ENCODE measurements at regions of chr11 and their contacts with region 1.

Region 1: GRCh38 chr11:130737866-130738431 is 178.3 kb downstream of the SNX19 start:
- DNase-seq: no peak
- H3K4me3 ChIP-seq: peak overlapping the region; percentile 19
- H3K27ac ChIP-seq: peak overlapping the region; percentile 51
- H3K4me1 ChIP-seq: peaks cover 14% of the 10 kb centered on the region
- H3K27me3 ChIP-seq: no peaks in the 10 kb centered on the region
- CTCF ChIP-seq: no peak

Region 2: GRCh38 chr11:130261571-130261970 is 476.4 kb before region 1 on chr11:
- CTCF ChIA-PET with region 1: no interaction called
- POLR2A ChIA-PET with region 1: no interaction called
- intact Hi-C with region 1: no loop called
- DNase-seq: no peak
- H3K4me3 ChIP-seq: no peak overlapping the region
- H3K27ac ChIP-seq: no peak overlapping the region
- H3K4me1 ChIP-seq: no peaks in the 10 kb centered on the region
- H3K27me3 ChIP-seq: no peaks in the 10 kb centered on the region
- CTCF ChIP-seq: no peak

Region 3: GRCh38 chr11:130580372-130580771 is 157.6 kb before region 1 on chr11:
- CTCF ChIA-PET with region 1: no interaction called
- POLR2A ChIA-PET with region 1: no interaction called
- intact Hi-C with region 1: loop called (anchors 2 kb)
- DNase-seq: peak; percentile 84
- H3K4me3 ChIP-seq: no peak overlapping the region
- H3K27ac ChIP-seq: no peak overlapping the region
- H3K4me1 ChIP-seq: peaks cover 15% of the 10 kb centered on the region
- H3K27me3 ChIP-seq: no peaks in the 10 kb centered on the region
- CTCF ChIP-seq: no peak

Region 4: DNA sequence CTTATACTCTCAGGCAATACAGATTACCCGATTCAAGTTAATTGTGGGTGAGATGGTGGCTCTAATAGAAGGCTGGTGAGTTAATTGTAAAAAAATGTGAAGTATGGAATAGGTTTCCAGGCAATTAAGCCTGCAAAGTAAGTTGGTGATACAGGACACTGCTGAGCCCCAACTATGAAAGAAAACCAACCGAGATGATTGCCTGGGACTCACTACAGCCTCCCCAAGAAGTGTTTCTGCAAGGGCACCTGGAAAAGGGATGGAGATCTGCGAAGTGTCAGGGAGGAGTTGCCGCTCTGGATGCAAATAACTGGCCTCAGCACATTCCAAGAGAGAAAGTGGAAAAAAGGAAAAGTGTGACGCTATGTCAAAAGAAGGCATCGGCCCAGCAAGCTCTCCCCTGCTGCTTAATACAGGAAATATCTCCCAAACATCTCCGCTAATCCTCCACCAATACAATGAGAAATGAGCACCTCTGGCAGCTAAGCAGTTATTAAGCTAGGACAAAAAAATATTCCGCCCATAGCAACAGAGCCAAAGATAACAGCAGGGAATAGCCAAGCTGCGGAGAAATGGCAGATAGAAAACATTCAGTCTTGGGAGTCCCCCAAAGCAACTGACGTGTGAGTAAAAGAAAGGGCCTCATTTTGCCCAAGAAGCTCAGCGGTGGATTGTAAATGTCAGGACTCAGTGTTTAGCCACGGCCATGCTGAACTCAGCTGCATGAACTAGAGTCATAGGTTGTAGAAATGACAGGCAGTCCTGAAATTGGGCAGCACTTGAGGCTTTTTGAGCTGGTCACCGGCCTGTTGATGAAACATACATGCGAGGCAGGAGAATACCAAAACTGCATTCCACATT is 44.6 kb after region 1 on chr11:
- CTCF ChIA-PET with region 1: no interaction called
- POLR2A ChIA-PET with region 1: no interaction called
- intact Hi-C with region 1: loop called (anchors 1 kb)
- DNase-seq: peak; percentile 95
- H3K4me3 ChIP-seq: peak overlapping the region; percentile 5
- H3K27ac ChIP-seq: peak overlapping the region; percentile 83
- H3K4me1 ChIP-seq: peaks cover 27% of the 10 kb centered on the region
- H3K27me3 ChIP-seq: no peaks in the 10 kb centered on the region
- CTCF ChIP-seq: no peak

Measured in A673 (cell line).